Sigmoid colon (tissue), 7 donors: ENCODE measurements at regions of chr4 and their contacts with region 1.

Region 1: GRCh38 chr4:55395529-55396307 is at the start of gene TMEM165:
- DNase-seq: peak; percentile 96
- H3K4me3 ChIP-seq: peak within 1 kb of the TSS; percentile 78 to 99 (median 86)
- H3K27ac ChIP-seq: peak within 1 kb of the TSS; percentile 96 to 100 (median 100)
- H3K4me1 ChIP-seq: peaks cover 0 to 38% (median 31%) of the 10 kb centered on the region in 4 donors
- H3K27me3 ChIP-seq: no peaks in the 10 kb centered on the region
- CTCF ChIP-seq: no peak
- EP300 ChIP-seq: no peak
- POLR2A ChIP-seq: peak; percentile 86 to 88
- total RNA-seq, gene TMEM165: 144 to 219 (median 165) TPM

Region 2: GRCh38 chr4:55358668-55359067 is 37.0 kb before region 1 on chr4:
- intact Hi-C with region 1: loop called (anchors 2 kb)
- DNase-seq: no peak
- H3K4me3 ChIP-seq: no peak overlapping the region
- H3K27ac ChIP-seq: peak overlapping the region; percentile 52 to 86 (median 80)
- H3K4me1 ChIP-seq: peaks cover 0 to 28% (median 19%) of the 10 kb centered on the region in 4 donors
- H3K27me3 ChIP-seq: no peaks in the 10 kb centered on the region
- CTCF ChIP-seq: no peak
- EP300 ChIP-seq: no peak
- POLR2A ChIP-seq: no peak

Region 3: GRCh38 chr4:55546756-55547465 is 151.2 kb after region 1 on chr4 and contains the start of gene CLOCK:
- intact Hi-C with region 1: loop called (anchors 1 kb)
- DNase-seq: peak; percentile 92
- H3K4me3 ChIP-seq: peak within 1 kb of the TSS; percentile 61 to 98 (median 86)
- H3K27ac ChIP-seq: peak within 1 kb of the TSS; percentile 91 to 99 (median 98)
- H3K4me1 ChIP-seq: peaks cover 3 to 24% (median 10%) of the 10 kb centered on the region in 4 donors
- H3K27me3 ChIP-seq: no peaks in the 10 kb centered on the region
- CTCF ChIP-seq: peak; percentile 22 to 58 (median 46)
- EP300 ChIP-seq: no peak
- POLR2A ChIP-seq: peak; percentile 51 to 63
- total RNA-seq, gene CLOCK: 22.5 to 27.5 (median 24.0) TPM

Region 4: GRCh38 chr4:55853484-55854046 is 457.8 kb after region 1 on chr4 and contains the start of gene EXOC1:
- intact Hi-C with region 1: loop called (anchors 10 kb)
- DNase-seq: peak; percentile 99
- H3K4me3 ChIP-seq: peak within 1 kb of the TSS; percentile 73 to 93 (median 86)
- H3K27ac ChIP-seq: peak within 1 kb of the TSS; percentile 85 to 88 (median 88)
- H3K4me1 ChIP-seq: peaks cover 0 to 21% (median 17%) of the 10 kb centered on the region in 4 donors
- H3K27me3 ChIP-seq: no peaks in the 10 kb centered on the region
- CTCF ChIP-seq: no peak
- EP300 ChIP-seq: peak in 1 of 4 donors; percentile 38
- POLR2A ChIP-seq: peak in 1 of 2 donors; percentile 32
- total RNA-seq, gene EXOC1: 14.5 to 49.0 (median 21.7) TPM